ENCODE measurements at regions of chr9 and their contacts with region 1.

Region 1: DNA sequence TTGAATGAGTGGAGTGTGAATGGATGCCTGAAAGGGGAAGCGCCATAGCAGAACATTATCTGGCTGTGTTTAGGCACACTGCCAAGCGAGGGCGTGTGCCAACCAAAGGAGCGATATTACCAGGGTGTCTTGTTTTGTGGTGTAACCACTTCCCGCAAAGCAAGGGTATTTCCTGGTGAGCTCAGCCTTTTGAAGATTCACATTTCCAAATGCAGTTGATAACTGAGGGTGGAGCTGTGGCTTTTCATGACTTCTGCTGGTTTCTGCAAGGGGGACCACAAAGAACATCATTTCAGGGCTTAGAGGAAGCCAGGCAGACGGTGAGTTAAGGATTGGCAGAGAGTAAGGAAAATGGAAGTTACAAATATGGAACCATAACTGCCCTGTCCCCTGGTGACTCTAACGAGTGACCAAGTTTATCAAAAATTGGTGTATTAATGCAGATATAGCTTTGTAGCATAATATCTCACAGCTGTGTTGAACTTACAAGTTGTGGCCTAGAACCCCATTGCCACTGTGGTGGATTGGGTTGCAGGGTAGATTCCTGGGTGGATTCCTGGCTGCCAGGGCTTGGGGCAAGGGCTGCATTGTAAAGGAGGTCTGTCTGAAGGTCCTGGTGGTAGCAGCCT is 71.4 kb downstream of the RALGPS1 start:
- DNase-seq: peak; percentile 97
- ATAC-seq: peak; percentile 70
- H3K4me3 ChIP-seq: peak overlapping the region; percentile 53
- H3K27ac ChIP-seq: peak overlapping the region; percentile 98
- H3K4me1 ChIP-seq: peaks cover 41% of the 10 kb centered on the region
- H3K27me3 ChIP-seq: no peaks in the 10 kb centered on the region
- CTCF ChIP-seq: 0 out of 2 replicates have a peak, but pooled peaks have one; percentile 23

Region 2: GRCh38 chr9:127021664-127022363 is 35.8 kb after region 1 on chr9:
- CTCF ChIA-PET with region 1: no interaction called
- POLR2A ChIA-PET with region 1: no interaction called
- intact Hi-C with region 1: loop called (anchors 5 kb)
- DNase-seq: no peak
- ATAC-seq: no peak
- H3K4me3 ChIP-seq: no peak overlapping the region
- H3K27ac ChIP-seq: no peak overlapping the region
- H3K4me1 ChIP-seq: peaks cover 32% of the 10 kb centered on the region
- H3K27me3 ChIP-seq: no peaks in the 10 kb centered on the region
- CTCF ChIP-seq: no peak

Measured in PC-3 (cell line).